Right cardiac atrium (tissue), 5 donors: ENCODE measurements at regions of chr12 and their contacts with region 1.

Region 1: GRCh38 chr12:66269757-66270383 is 32.4 kb upstream of the HELB start:
- DNase-seq: peak in 1 of 3 donors; percentile 46
- ATAC-seq: peak; percentile 40 to 51
- H3K4me3 ChIP-seq: no peak overlapping the region
- H3K27ac ChIP-seq: no peak overlapping the region
- H3K4me1 ChIP-seq: no peaks in the 10 kb centered on the region
- H3K27me3 ChIP-seq: no peaks in the 10 kb centered on the region

Region 2: DNA sequence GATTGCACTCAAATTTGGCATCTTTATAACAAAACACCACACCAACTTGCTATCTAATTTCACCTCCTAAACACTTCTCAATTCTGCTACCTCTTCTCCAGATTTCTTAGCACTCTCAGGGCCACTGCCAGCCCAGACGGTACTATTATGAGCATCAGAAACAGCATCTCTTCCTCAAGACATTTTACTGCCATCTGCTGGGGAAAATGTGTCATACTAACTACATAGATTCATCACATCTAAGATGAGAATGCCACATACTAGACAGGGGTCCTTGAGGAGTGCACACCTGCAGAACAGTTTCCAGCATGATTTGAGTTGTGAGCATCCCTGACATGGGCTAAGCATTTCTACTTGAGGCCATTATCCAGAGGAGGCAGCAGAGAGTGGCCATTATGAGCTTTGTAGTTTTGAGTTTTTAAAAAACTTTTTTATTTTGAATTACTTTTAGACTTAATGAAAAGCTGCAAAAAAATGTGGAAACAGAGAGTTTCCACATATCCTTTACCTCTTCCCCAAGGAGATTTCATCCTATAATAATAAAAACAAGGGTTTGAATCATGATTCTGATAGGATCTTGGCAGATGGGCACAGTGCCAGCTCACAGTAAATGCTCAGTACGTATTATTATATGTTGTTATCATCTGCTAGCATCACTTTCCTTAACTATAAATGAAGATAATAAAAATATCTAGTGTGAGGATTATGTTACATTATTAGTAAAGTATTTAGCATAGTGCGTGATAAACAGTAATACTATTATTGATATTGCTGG is 424.2 kb after region 1 on chr12:
- intact Hi-C with region 1: loop called in 1 of 4 experiments (anchors 10 kb)
- DNase-seq: peak in 2 of 3 donors; percentile 15 to 38
- ATAC-seq: peak; percentile 52 to 75
- H3K4me3 ChIP-seq: no peak overlapping the region
- H3K27ac ChIP-seq: no peak overlapping the region
- H3K4me1 ChIP-seq: peaks cover 3% of the 10 kb centered on the region
- H3K27me3 ChIP-seq: no peaks in the 10 kb centered on the region